Dendritic cell treated with granulocyte-macrophage colony-stimulating factor and Interleukin-4, amounts not matched to agents 40 ng/mL and 50 ng/mL, for 4 days (primary cell): ENCODE measurements at regions of chr3 and their contacts with region 1.

Region 1: DNA sequence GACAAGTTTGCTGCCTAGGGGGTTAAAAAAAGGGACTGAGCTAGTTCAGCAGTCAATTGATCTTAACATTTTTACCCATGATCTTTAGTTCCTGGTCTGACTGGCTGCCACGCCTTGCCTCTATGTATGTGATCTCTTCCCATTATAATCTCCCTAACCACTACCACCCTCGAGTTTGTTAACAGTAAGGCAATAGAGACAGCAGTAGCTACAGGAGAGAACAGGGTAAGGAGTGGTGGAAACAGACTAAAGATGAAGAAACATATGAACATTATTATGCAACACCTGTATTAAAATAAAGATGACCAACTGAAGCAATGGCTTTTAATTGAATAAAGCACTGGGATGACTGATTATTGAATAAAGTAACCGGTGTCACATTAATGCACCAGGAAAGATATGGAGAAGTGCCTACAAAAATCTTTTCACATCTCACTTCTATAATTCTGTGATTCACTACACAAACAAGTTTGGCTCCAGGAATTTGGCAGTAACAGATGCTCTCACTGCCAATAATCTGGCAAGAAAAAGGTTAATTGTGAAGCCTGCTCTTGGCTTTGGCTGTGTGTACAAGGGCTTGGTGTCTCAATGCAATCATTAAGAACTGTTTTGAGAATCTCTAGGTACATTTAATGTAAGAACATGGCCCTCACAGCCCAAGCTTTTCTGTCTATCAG is 95.7 kb downstream of the HHLA2 start:
- H3K4me3 Mint-ChIP-seq: no peak overlapping the region
- H3K27ac Mint-ChIP-seq: no peak overlapping the region
- H3K4me1 Mint-ChIP-seq: peaks cover 18% of the 10 kb centered on the region
- H3K27me3 Mint-ChIP-seq: peaks cover 4% of the 10 kb centered on the region

Region 2: GRCh38 chr3:108073764-108074431 is 318.2 kb before region 1 on chr3:
- intact Hi-C with region 1: loop called (anchors 10 kb)
- H3K4me3 Mint-ChIP-seq: no peak overlapping the region
- H3K27ac Mint-ChIP-seq: peak overlapping the region; percentile 4
- H3K4me1 Mint-ChIP-seq: peaks cover 44% of the 10 kb centered on the region
- H3K27me3 Mint-ChIP-seq: no peaks in the 10 kb centered on the region

Region 3: DNA sequence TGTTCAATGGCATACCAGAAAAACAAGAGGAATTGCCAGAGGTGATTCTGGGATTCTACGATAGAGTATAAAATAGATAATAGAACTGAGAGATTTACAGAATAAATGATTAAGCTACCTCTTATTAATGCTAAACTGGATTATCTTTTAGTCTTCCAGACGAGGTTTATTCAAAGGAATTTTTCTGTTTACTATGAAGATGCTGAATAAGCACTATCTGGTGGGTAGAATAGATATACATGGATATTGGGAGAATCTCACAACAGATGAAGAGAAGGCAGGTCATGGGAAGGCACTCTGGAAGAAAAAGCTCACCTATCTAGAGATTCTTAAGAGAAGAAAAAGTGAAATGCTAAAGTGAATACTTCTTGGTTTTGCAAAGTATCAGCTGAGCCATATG is 186.0 kb after region 1 on chr3:
- intact Hi-C with region 1: no loop called
- H3K4me3 Mint-ChIP-seq: no peak overlapping the region
- H3K27ac Mint-ChIP-seq: no peak overlapping the region
- H3K4me1 Mint-ChIP-seq: no peaks in the 10 kb centered on the region
- H3K27me3 Mint-ChIP-seq: no peaks in the 10 kb centered on the region